GM12878 (cell line): ENCODE measurements at regions of chr12 and their contacts with region 1.

Region 1: DNA sequence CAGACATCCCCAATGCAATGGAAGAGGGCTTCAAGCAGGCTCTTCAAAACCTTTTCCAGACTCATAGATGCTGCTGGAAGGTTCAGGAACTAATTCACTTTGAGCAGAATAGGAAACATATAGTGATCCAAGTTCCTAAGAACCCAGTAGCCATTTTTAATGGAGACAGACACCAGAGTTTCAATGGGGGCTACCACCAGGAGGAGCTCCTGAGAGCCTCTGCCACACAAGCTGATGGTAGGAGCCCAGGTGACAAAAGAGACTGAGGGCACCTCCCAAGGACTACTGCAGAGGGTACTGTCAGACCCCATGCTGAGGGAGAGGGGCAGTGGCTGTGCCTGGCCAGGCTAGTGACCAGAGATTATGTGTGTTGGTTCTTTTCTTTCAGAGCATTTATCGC is 45.9 kb downstream of the IFNG start:
- DNase-seq: no peak
- ATAC-seq: peak; percentile 79
- H3K4me3 ChIP-seq: no peak overlapping the region
- H3K27ac ChIP-seq: no peak overlapping the region
- H3K4me1 ChIP-seq: peaks cover 3% of the 10 kb centered on the region; the same call in 1 of the 2 replicates
- H3K27me3 ChIP-seq: no peaks in the 10 kb centered on the region
- CTCF ChIP-seq: peak; percentile 42 to 67 (median 63)
- EP300 ChIP-seq: no peak
- POLR2A ChIP-seq: no peak
- RAD21 ChIP-seq: peak; percentile 38; the same call in 1 of the 2 replicates

Region 2: GRCh38 chr12:68102163-68102562 is 11.5 kb before region 1 on chr12:
- CTCF ChIA-PET with region 1: interaction called, 15 read pairs
- POLR2A ChIA-PET with region 1: no interaction called
- RAD21 ChIA-PET with region 1: no interaction called
- SMC1A ChIA-PET with region 1: interaction called, 4 read pairs
- in situ Hi-C with region 1: no loop called
- intact Hi-C with region 1: no loop called
- DNase-seq: no peak
- ATAC-seq: no peak
- H3K4me3 ChIP-seq: no peak overlapping the region
- H3K27ac ChIP-seq: no peak overlapping the region
- H3K4me1 ChIP-seq: no peaks in the 10 kb centered on the region
- H3K27me3 ChIP-seq: no peaks in the 10 kb centered on the region; a peak in 1 of 4 replicates
- CTCF ChIP-seq: no peak
- EP300 ChIP-seq: no peak
- POLR2A ChIP-seq: no peak
- RAD21 ChIP-seq: no peak

Region 3: DNA sequence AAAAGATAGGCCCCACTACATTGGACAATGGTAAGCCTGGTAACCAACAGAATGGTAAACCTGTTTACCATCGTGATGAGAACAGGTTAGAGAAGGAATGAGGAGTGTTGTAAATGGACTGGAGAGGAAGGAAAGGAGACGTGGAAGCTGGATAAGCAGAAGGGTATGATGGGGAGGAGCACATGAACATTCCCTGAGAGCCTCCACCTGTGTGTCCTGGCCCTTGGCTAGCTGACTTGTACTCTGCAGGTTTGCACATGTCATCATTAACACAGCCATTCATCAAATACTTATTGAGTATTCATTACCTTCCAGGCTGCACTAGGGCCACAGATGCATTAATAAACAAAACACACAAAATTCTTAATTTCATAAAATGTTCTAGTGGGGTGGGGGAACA is 116.3 kb after region 1 on chr12:
- CTCF ChIA-PET with region 1: no interaction called
- POLR2A ChIA-PET with region 1: no interaction called
- RAD21 ChIA-PET with region 1: no interaction called
- SMC1A ChIA-PET with region 1: no interaction called
- in situ Hi-C with region 1: no loop called
- intact Hi-C with region 1: no loop called
- DNase-seq: no peak
- ATAC-seq: no peak
- H3K4me3 ChIP-seq: no peak overlapping the region
- H3K27ac ChIP-seq: no peak overlapping the region
- H3K4me1 ChIP-seq: no peaks in the 10 kb centered on the region
- H3K27me3 ChIP-seq: no peaks in the 10 kb centered on the region
- CTCF ChIP-seq: no peak
- EP300 ChIP-seq: no peak
- POLR2A ChIP-seq: no peak
- RAD21 ChIP-seq: no peak